AG04450 (cell line): ENCODE measurements at regions of chr9 and their contacts with region 1.

Region 1: GRCh38 chr9:101387871-101388506 is 3.2 kb upstream of the BAAT start:
- DNase-seq: no peak
- H3K4me3 ChIP-seq: no peak overlapping the region
- H3K27ac ChIP-seq: no peak overlapping the region
- H3K27me3 ChIP-seq: no peaks in the 10 kb centered on the region
- CTCF ChIP-seq: peak; percentile 68

Region 2: GRCh38 chr9:101376111-101376848 is 11.7 kb before region 1 on chr9:
- CTCF ChIA-PET with region 1: interaction called, 23 read pairs
- POLR2A ChIA-PET with region 1: no interaction called
- DNase-seq: no peak
- H3K4me3 ChIP-seq: no peak overlapping the region
- H3K27ac ChIP-seq: no peak overlapping the region
- H3K27me3 ChIP-seq: no peaks in the 10 kb centered on the region
- CTCF ChIP-seq: no peak

Region 3: GRCh38 chr9:101398068-101398929 is 10.3 kb after region 1 on chr9 and contains the starts of genes MRPL50 and ZNF189:
- CTCF ChIA-PET with region 1: interaction called, 31 read pairs
- POLR2A ChIA-PET with region 1: interaction called, 5 read pairs
- DNase-seq: peak; percentile 95
- H3K4me3 ChIP-seq: peak within 1 kb of the TSS; percentile 83
- H3K27ac ChIP-seq: peak within 1 kb of the TSS; percentile 81
- H3K27me3 ChIP-seq: no peaks in the 10 kb centered on the region
- CTCF ChIP-seq: no peak
- polyA plus RNA-seq, gene MRPL50: 12.0 and 15.0 TPM in 2 replicates
- polyA plus RNA-seq, gene ZNF189: 10.0 and 13.2 TPM in 2 replicates